Activated CD4-positive, alpha-beta memory T cell treated with anti-CD3 and anti-CD28 coated beads for 36 hours (primary cell): ENCODE measurements at regions of chr16 and their contacts with region 1.

Region 1: DNA sequence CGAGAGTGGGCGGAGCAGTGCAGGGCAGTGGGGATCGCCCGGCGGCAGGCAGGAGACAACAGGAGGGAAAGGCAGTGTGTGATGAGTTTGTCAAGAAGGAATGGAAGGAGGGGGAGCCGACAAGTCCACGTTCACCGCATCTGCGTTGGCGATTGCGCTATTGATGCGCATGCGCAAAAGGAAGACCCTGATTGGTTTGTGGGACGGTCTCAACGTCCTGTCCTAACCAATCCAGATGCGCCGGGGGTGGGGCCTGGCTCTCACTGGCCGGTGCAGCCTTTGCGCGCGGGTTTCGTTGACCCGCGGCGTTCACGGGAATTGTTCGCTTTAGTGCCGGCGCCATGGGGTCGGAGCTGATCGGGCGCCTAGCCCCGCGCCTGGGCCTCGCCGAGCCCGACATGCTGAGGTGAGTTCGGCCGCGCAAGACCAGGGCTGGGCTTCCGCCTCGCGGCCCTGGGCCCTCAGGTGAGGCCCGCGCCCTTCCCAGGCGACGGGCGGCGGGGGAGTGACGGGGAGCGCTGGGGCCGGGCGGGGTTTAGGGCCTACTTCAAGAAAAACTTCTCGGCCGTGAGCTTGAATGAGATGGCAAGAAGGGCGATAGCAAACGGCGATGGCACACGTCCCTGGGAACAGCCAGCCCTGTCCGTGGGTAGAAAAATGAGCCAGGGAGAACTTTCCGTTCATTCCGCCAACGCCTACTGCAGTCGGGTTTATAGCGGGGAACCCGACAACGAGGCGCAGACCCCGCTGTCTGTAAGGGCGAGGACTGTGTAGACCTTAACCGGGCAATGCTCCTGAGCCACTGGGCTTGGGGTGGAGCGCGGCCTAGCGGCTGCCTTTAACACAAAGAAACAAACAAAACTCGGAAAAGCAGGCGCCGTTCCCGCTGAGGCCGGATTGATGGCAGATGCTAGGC is at the start of gene ORC6:
- DNase-seq: peak; percentile 98
- H3K4me3 Mint-ChIP-seq: no peak within 1 kb of the TSS
- H3K27ac Mint-ChIP-seq: no peak within 1 kb of the TSS
- H3K4me1 Mint-ChIP-seq: peaks cover 42% of the 10 kb centered on the region
- H3K27me3 Mint-ChIP-seq: no peaks in the 10 kb centered on the region
- total RNA-seq, gene ORC6: 48.6 to 51.7 TPM

Region 2: DNA sequence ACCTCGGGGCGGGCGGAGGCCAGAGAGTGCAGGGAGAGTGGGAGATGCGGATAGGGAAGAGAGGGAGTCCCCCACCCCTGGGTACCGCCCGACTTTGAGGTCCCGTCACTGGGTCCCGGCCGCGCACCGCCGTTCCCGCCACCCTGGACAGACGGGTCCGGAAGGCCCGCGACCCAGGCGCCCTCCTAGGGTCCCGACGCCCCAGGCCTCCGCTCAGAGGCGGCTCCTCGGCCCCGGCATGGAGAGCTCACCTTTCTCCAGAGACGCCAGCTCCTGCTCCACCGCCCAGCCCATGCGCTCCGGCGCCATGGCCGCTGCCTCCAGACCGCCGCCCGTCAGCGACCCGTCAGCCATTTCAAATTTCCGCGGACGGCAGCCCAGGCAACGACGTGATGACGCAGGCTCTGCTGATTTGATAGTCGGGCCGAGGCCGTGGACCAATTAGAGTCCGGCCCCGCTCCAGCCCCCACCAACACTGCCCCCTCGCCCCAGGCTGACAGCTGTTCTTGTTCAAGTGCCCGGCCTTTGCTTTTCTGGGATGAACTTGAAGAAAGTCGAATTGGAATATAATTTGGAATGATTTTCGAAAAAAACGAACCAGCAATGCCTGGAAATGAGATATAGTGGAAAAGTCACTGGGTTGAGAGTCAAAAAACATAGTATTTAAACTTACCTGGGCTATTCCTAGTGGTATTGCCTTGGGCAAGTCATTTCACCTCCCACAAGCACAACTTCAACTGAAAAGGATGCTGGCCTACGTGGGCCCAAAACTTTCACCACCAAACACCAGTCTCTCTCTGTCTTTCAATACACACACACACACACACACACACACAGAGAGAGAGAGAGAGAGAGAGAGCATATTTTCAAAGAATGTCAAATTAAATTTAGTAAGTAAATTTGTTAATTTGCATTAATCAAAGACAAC is 68.4 kb before region 1 on chr16 and contains the start of gene SHCBP1:
- CTCF ChIA-PET with region 1: no interaction called
- POLR2A ChIA-PET with region 1: no interaction called
- intact Hi-C with region 1: loop called (anchors 2 kb)
- DNase-seq: peak; percentile 91
- H3K4me3 Mint-ChIP-seq: peak within 1 kb of the TSS; percentile 89
- H3K27ac Mint-ChIP-seq: peak within 1 kb of the TSS; percentile 69
- H3K4me1 Mint-ChIP-seq: peaks cover 23% of the 10 kb centered on the region
- H3K27me3 Mint-ChIP-seq: no peaks in the 10 kb centered on the region
- total RNA-seq, gene SHCBP1: 49.0 to 50.5 TPM

Region 3: DNA sequence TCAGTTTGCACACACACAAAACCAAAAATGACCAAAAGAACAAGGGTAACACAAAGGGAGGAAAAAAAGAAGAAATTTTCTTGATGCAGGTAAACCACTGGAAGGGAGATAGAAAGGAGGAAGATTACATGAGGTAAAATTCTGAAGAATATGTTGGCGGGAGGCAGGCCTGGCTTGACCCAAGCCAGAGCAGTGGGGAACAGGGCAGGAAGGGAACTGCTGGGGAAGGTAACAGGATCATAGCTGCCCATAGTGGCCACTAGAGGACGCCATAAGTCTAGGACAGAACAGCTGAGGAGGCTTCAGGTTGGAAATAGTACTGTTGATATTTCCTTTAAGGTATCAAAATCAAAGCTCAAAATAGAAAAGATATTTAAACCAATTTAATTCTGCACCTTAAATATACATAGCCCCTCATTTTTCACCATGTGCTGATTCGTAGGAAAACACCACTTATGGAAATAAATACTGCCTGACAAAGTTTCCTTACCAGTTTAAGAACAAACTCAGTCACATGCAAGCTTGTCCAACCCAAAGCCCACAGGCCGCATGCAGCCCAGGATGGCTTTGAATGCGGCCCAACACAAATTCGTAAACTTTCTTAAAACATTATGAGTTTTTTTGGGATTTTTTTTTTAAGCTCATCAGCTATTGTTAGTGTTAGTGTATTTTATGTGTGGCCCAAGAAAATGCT is 16.2 kb before region 1 on chr16:
- CTCF ChIA-PET with region 1: interaction called, 36 read pairs
- POLR2A ChIA-PET with region 1: interaction called, 3 read pairs
- intact Hi-C with region 1: loop called (anchors 1 kb)
- DNase-seq: peak; percentile 61
- H3K4me3 Mint-ChIP-seq: no peak overlapping the region
- H3K27ac Mint-ChIP-seq: no peak overlapping the region
- H3K4me1 Mint-ChIP-seq: no peaks in the 10 kb centered on the region
- H3K27me3 Mint-ChIP-seq: no peaks in the 10 kb centered on the region

Region 4: GRCh38 chr16:46812781-46813540 is 123.3 kb after region 1 on chr16:
- CTCF ChIA-PET with region 1: no interaction called
- POLR2A ChIA-PET with region 1: no interaction called
- intact Hi-C with region 1: loop called (anchors 1 kb)
- DNase-seq: peak; percentile 30
- H3K4me3 Mint-ChIP-seq: peak overlapping the region; percentile 12
- H3K27ac Mint-ChIP-seq: peak overlapping the region; percentile 80
- H3K4me1 Mint-ChIP-seq: peaks cover 53% of the 10 kb centered on the region
- H3K27me3 Mint-ChIP-seq: no peaks in the 10 kb centered on the region

Region 5: DNA sequence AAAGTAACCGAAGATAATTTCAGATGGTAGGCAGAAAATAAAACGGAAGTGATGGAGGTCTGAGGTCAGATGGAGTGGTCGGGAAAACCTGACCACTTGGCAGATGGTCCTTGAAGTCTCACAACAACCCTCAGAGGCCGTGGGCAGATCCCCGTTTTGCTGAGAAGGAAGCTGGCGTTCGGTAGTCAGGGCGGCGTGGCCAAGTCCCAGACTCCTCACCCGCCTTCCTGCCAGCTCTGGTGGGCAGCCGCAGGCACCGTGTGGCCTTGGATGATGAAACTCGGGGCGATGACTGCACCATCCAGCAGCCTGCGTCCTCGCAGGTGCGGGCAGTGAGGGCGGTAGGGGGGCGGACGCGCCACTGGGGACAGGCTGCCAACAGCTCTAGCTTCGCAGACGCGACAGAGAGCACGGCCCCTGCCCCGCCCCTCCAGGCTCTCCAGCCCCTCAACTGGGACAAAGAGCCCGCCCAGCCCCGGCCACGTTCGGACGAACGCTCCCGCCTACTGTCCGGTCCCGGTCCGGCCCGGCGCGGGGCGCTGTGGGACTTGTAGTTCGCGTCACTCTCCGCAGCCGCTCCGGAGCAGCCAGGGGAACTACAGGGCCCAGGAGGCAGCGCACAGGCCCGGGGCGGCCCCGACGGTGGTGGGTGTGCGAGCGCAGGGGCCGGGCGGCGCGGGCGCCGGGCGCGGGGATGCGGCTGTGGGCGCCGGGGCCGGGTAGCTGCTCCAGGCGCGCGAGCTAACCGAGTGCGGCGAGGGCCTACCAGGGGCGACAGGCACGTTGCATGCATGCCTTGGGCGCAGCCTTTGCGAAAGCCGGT is 194.3 kb after region 1 on chr16 and contains the start of gene GPT2:
- CTCF ChIA-PET with region 1: interaction called, 6 read pairs
- POLR2A ChIA-PET with region 1: interaction called, 9 read pairs
- intact Hi-C with region 1: loop called (anchors 1 kb)
- DNase-seq: peak; percentile 88
- H3K4me3 Mint-ChIP-seq: peak within 1 kb of the TSS; percentile 73
- H3K27ac Mint-ChIP-seq: peak within 1 kb of the TSS; percentile 72
- H3K4me1 Mint-ChIP-seq: peaks cover 18% of the 10 kb centered on the region
- H3K27me3 Mint-ChIP-seq: peaks cover 5% of the 10 kb centered on the region
- total RNA-seq, gene GPT2: 20.2 to 23.1 TPM

Region 6: DNA sequence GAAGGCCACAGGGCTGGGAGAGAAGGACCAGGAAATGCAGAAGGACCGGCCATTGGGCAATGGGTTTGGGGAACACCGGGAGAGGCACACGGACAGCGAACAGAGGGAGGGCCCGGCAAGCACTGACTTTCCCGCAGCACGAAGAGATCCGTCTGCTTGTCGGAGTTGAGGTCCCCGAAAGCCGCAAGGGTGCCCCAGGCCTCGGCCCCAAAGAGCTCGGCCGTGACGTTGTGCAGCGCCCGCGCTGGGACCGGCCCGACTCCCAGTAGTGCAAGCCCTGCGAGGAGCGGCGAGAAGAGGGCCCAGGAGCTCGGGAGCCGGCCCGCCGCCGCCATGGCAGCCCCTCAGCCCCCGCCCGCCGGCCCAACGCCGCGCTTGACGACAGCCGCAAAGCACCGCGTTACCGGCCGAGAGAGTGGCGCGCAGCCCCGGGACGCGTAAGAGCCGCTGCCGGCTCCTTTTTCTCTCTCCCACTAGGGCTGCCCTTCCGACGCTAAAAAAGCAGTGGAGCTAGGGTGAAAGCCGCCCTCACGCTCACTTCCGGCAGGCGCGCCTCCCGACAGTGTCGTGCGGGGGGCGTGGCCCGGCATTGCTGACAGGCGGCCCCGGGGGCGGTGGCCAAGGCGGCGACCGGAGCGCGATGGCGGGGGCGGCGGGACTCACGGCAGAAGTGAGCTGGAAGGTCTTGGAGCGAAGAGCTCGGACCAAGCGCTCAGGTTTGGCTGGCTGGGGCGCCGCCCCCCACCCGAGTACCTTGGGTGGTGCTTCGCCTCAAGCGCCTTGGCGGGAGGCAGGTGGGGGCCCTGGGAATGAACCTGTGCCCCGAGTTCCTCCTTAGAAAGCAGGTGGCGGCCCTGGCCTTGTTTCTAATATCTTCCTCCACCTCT is 771.3 kb after region 1 on chr16 and contains the starts of genes ITFG1 and PHKB:
- CTCF ChIA-PET with region 1: no interaction called
- POLR2A ChIA-PET with region 1: no interaction called
- intact Hi-C with region 1: loop called (anchors 10 kb)
- DNase-seq: peak; percentile 96
- H3K4me3 Mint-ChIP-seq: peak within 1 kb of the TSS; percentile 93
- H3K27ac Mint-ChIP-seq: peak within 1 kb of the TSS; percentile 95
- H3K4me1 Mint-ChIP-seq: peaks cover 53% of the 10 kb centered on the region
- H3K27me3 Mint-ChIP-seq: no peaks in the 10 kb centered on the region
- total RNA-seq, gene ITFG1: 20.6 to 22.0 TPM
- total RNA-seq, gene PHKB: 27.6 to 28.8 TPM